ENCODE measurements at regions of chr13 and their contacts with region 1.

Region 1: GRCh38 chr13:77065461-77066147 is 38.6 kb upstream of the FBXL3 start:
- DNase-seq: peak; percentile 28
- H3K4me3 ChIP-seq: no peak overlapping the region
- H3K27ac ChIP-seq: no peak overlapping the region
- H3K4me1 ChIP-seq: peaks cover 6% of the 10 kb centered on the region
- H3K27me3 ChIP-seq: no peaks in the 10 kb centered on the region
- CTCF ChIP-seq: no peak
- POLR2A ChIP-seq: no peak

Region 2: GRCh38 chr13:76637641-76638141 is 427.9 kb before region 1 on chr13:
- CTCF ChIA-PET with region 1: no interaction called
- POLR2A ChIA-PET with region 1: no interaction called
- dilution Hi-C with region 1: no loop called
- intact Hi-C with region 1: no loop called
- DNase-seq: peak; percentile 80
- H3K4me3 ChIP-seq: no peak overlapping the region
- H3K27ac ChIP-seq: no peak overlapping the region
- H3K4me1 ChIP-seq: peaks cover 6% of the 10 kb centered on the region
- H3K27me3 ChIP-seq: no peaks in the 10 kb centered on the region
- CTCF ChIP-seq: no peak
- POLR2A ChIP-seq: no peak

Region 3: DNA sequence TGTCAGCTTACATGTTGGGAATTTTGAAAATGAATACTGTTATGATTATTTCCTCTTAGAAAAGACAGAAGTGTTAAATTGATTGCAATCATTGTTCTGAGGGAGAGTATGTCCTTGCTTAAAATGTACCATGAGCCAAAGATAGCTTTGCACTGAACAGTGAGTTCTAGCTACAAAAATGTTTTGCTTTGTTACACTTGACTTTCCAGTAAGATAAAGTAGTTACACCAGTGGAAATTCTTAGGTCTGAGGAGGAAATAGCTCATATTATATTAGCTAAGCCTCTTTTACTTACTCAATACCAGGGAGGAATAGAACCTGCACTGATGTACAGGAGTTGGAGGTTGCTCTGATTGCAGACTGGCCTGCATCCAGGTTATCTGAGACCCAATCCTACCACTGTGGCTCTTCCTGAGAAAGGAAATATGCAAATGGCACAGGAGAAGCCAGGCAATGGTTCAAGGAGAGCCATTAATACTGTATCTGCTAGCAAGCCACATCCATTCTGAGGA is 14.4 kb after region 1 on chr13:
- CTCF ChIA-PET with region 1: interaction called, 4 read pairs
- POLR2A ChIA-PET with region 1: no interaction called
- dilution Hi-C with region 1: no loop called
- intact Hi-C with region 1: loop called (anchors 1 kb)
- DNase-seq: no peak
- H3K4me3 ChIP-seq: no peak overlapping the region
- H3K27ac ChIP-seq: no peak overlapping the region
- H3K4me1 ChIP-seq: no peaks in the 10 kb centered on the region
- H3K27me3 ChIP-seq: no peaks in the 10 kb centered on the region
- CTCF ChIP-seq: no peak
- POLR2A ChIP-seq: no peak

Measured in endothelial cell of umbilical vein (primary cell).